ENCODE measurements at regions of chr10 and their contacts with region 1.

Region 1: DNA sequence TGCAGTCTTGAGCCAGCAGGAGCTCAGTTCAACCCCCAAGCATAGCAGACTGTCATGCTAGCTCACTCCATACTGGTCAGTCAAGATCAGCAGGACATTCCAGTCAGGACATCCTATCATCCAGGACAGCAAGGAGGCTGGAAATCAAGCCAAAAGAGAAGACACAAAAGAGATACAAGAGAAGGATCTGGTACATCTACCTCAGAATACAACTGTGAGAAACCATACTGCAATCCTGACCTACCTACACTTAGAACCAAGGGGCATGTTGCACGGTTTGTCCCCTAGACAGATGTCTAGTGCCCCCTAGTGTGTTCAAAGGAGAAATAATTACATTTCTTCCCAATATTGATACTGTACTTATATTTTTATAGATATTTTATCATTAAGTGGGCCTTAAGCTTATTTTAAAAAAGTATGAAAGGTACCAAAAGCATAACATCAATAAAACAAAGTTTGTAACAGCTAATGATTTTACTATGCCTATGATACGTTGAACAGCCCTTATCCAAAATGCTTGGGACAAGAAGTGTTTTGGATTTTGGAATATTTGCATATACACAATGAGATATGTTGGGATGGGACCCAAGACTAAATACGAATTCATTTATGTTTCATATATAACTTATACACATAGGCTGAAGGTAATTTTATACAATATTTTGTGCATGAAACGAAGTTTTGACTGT is 26.7 kb downstream of the ERCC6 start:
- DNase-seq: peak; percentile 56
- H3K4me3 ChIP-seq: no peak overlapping the region
- H3K27ac ChIP-seq: no peak overlapping the region
- H3K4me1 ChIP-seq: no peaks in the 10 kb centered on the region
- CTCF ChIP-seq: peak; percentile 88

Region 2: GRCh38 chr10:49407552-49408137 is 104.6 kb before region 1 on chr10:
- CTCF ChIA-PET with region 1: interaction called, 14 read pairs
- POLR2A ChIA-PET with region 1: interaction called, 4 read pairs
- intact Hi-C with region 1: loop called (anchors 1 kb)
- DNase-seq: peak; percentile 70
- H3K4me3 ChIP-seq: no peak overlapping the region
- H3K27ac ChIP-seq: no peak overlapping the region
- H3K4me1 ChIP-seq: no peaks in the 10 kb centered on the region
- CTCF ChIP-seq: peak; percentile 92

Measured in OCI-LY7 (cell line).